ENCODE measurements at regions of chr22 and their contacts with region 1.

Region 1: DNA sequence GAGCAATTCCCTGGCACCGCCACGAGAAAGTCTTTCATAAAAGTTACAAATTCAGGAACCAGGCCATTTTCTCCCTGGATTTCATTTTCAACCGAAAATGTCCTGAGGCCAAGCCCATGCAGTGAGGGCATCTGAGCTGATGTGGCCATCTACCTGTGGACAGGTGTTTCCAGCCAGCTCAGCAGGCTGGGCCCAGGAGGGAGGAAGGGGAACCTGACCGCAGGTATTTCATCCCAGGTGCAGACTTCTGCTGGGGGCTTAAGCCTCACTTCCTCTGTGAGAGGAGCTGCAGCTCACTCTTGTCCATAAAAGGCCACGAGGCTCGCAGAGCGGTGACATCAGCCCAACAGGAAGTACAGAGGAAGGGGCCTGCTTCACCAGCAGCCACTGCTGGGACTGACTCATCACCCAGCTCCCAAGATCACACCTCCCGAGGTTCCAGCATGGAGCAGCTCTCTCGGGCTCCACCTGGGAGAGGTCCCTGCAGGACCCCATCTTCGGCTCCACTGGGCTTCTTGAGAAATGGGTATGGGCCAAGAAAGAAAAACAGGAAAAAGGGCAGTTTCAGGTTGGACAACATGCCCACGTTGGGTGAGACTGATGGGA is 56.4 kb downstream of the MYH9 start:
- DNase-seq: peak; percentile 67 to 90 (median 76)
- H3K4me3 ChIP-seq: peak overlapping the region; percentile 62
- H3K4me3 Mint-ChIP-seq: peak overlapping the region; percentile 85 to 94 (median 89)
- H3K27ac ChIP-seq: peak overlapping the region; percentile 81
- H3K27ac Mint-ChIP-seq: peak overlapping the region; percentile 94 to 100 (median 99)
- H3K4me1 ChIP-seq: peaks cover 89% of the 10 kb centered on the region
- H3K4me1 Mint-ChIP-seq: peaks cover 98 to 100% (median 100%) of the 10 kb centered on the region in 3 donors
- H3K27me3 ChIP-seq: no peaks in the 10 kb centered on the region
- H3K27me3 Mint-ChIP-seq: peaks cover 0 to 3% of the 10 kb centered on the region in 2 donors

Region 2: GRCh38 chr22:36211237-36211861 is 120.1 kb before region 1 on chr22:
- CTCF ChIA-PET with region 1: no interaction called
- POLR2A ChIA-PET with region 1: no interaction called
- DNase-seq: no peak
- H3K4me3 ChIP-seq: no peak overlapping the region
- H3K4me3 Mint-ChIP-seq: no peak overlapping the region
- H3K27ac ChIP-seq: no peak overlapping the region
- H3K27ac Mint-ChIP-seq: no peak overlapping the region
- H3K4me1 ChIP-seq: no peaks in the 10 kb centered on the region
- H3K4me1 Mint-ChIP-seq: peaks cover 7 to 12% (median 9%) of the 10 kb centered on the region in 3 donors
- H3K27me3 ChIP-seq: peaks cover 5% of the 10 kb centered on the region
- H3K27me3 Mint-ChIP-seq: peaks cover 28 to 80% of the 10 kb centered on the region in 2 donors

Region 3: GRCh38 chr22:36252754-36253517 is 78.5 kb before region 1 on chr22 and contains the start of gene APOL1:
- CTCF ChIA-PET with region 1: no interaction called
- POLR2A ChIA-PET with region 1: no interaction called
- DNase-seq: peak in 4 of 5 donors; percentile 39 to 70 (median 62)
- H3K4me3 ChIP-seq: peak within 1 kb of the TSS; percentile 74
- H3K4me3 Mint-ChIP-seq: peak within 1 kb of the TSS; percentile 88 to 99 (median 96)
- H3K27ac ChIP-seq: peak within 1 kb of the TSS; percentile 58
- H3K27ac Mint-ChIP-seq: peak within 1 kb of the TSS; percentile 76 to 99 (median 97)
- H3K4me1 ChIP-seq: peaks cover 38% of the 10 kb centered on the region
- H3K4me1 Mint-ChIP-seq: peaks cover 44 to 53% (median 46%) of the 10 kb centered on the region in 3 donors
- H3K27me3 ChIP-seq: no peaks in the 10 kb centered on the region
- H3K27me3 Mint-ChIP-seq: no peaks in the 10 kb centered on the region
- total RNA-seq, gene APOL1: 32.8 to 34.3 TPM

Region 4: GRCh38 chr22:36350751-36351594 is 19.6 kb after region 1 on chr22:
- CTCF ChIA-PET with region 1: interaction called, 8 read pairs
- POLR2A ChIA-PET with region 1: interaction called, 13 read pairs
- DNase-seq: no peak
- H3K4me3 ChIP-seq: no peak overlapping the region
- H3K4me3 Mint-ChIP-seq: peak overlapping the region; percentile 53 to 91 (median 72)
- H3K27ac ChIP-seq: no peak overlapping the region
- H3K27ac Mint-ChIP-seq: peak overlapping the region; percentile 87 to 99 (median 95)
- H3K4me1 ChIP-seq: peaks cover 92% of the 10 kb centered on the region
- H3K4me1 Mint-ChIP-seq: peaks cover 85 to 95% (median 91%) of the 10 kb centered on the region in 3 donors
- H3K27me3 ChIP-seq: no peaks in the 10 kb centered on the region
- H3K27me3 Mint-ChIP-seq: peaks cover 0 to 10% of the 10 kb centered on the region in 2 donors

Region 5: DNA sequence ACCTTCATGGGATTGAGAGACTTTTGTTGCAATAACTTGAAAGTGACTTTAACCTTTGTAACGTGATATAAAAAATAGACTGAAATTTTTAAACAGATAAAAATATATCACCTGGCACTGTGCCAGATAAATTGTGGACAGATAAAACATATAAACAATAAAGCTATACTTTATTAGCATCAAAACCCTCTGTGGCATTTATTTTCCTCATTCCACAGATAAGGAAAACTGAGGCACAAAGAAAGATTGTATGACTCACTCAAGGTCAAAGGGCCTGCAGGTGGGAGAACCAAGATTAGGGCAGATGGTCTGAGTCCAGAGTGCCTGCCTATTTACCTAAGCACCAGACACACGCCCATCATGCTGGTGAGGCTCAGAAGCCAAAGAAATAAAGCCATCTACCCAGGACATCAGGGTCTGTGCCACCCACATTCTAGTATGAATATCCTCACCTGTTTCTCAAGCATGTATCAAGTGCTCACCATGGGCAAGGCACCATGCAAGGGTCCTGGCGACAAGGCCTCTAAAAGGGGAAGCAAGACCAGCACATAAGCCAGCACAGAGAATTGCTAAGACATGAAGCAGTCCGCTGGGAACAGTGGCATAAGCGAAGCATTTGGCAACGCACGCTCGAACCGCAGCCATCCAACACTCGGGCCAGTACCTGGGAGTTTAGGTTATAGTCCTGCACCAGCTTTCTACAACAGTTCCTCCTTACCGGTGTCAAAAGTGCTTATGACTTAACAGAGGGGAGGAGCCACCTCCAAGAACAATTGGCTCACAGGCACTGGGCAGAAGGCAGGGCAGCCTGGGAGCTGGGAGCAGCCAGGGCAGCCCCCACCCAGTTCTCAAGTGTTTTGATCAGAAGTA is 38.7 kb after region 1 on chr22:
- CTCF ChIA-PET with region 1: interaction called, 22 read pairs
- POLR2A ChIA-PET with region 1: interaction called, 60 read pairs
- DNase-seq: peak in 1 of 5 donors; percentile 53
- H3K4me3 ChIP-seq: peak overlapping the region; percentile 23
- H3K4me3 Mint-ChIP-seq: peak overlapping the region; percentile 83 to 96 (median 89)
- H3K27ac ChIP-seq: peak overlapping the region; percentile 38
- H3K27ac Mint-ChIP-seq: peak overlapping the region; percentile 85 to 100 (median 98)
- H3K4me1 ChIP-seq: peaks cover 100% of the 10 kb centered on the region
- H3K4me1 Mint-ChIP-seq: peaks cover 88 to 98% (median 97%) of the 10 kb centered on the region in 3 donors
- H3K27me3 ChIP-seq: no peaks in the 10 kb centered on the region
- H3K27me3 Mint-ChIP-seq: peaks cover 0 to 4% of the 10 kb centered on the region in 2 donors

Region 6: GRCh38 chr22:36387752-36388518 is 56.5 kb after region 1 on chr22 and contains the start of gene MYH9:
- CTCF ChIA-PET with region 1: interaction called, 44 read pairs
- POLR2A ChIA-PET with region 1: interaction called, 76 read pairs
- DNase-seq: peak; percentile 97 to 99 (median 99)
- H3K4me3 ChIP-seq: peak within 1 kb of the TSS; percentile 82
- H3K4me3 Mint-ChIP-seq: peak within 1 kb of the TSS; percentile 85 to 99 (median 90)
- H3K27ac ChIP-seq: peak within 1 kb of the TSS; percentile 64
- H3K27ac Mint-ChIP-seq: peak within 1 kb of the TSS; percentile 73 to 99 (median 93)
- H3K4me1 ChIP-seq: peaks cover 33% of the 10 kb centered on the region
- H3K4me1 Mint-ChIP-seq: peaks cover 34 to 43% (median 38%) of the 10 kb centered on the region in 3 donors
- H3K27me3 ChIP-seq: no peaks in the 10 kb centered on the region
- H3K27me3 Mint-ChIP-seq: peaks cover 0 to 1% of the 10 kb centered on the region in 2 donors
- total RNA-seq, gene MYH9: 680 to 684 TPM

Region 7: DNA sequence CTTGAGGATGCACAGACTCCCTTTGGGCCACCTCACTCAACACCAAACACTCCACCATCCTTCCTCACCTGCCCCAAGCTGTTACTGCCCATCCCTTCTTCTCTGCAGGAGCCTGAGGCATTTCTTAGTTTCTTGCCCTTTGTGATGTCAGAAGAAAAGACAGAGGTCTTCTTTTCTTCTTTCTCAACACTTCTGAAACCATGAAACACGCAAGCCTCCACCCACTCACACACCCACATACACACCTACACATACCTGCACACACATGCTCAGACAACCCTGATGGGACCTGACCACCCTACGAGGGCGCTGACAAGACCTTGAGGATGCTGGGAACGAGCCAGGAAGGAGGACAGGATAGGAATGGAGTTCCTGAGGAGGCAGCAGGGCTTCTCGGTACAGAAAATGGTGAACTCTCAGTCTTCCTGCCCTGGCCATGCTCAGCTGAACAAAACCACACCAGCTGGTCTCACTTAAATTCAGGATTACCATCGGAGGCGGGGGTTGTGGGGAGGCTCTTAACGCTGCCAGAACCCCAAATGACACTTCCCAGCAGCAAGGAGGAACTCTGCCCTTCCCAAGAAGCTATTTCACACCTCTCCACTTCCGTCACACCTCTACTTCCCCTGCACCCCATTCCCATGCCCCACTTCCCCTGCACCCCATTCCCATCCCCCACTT is 622.9 kb after region 1 on chr22:
- CTCF ChIA-PET with region 1: no interaction called
- POLR2A ChIA-PET with region 1: no interaction called
- DNase-seq: no peak
- H3K4me3 ChIP-seq: no peak overlapping the region
- H3K4me3 Mint-ChIP-seq: no peak overlapping the region
- H3K27ac ChIP-seq: no peak overlapping the region
- H3K27ac Mint-ChIP-seq: no peak overlapping the region
- H3K4me1 ChIP-seq: no peaks in the 10 kb centered on the region
- H3K4me1 Mint-ChIP-seq: no peaks in the 10 kb centered on the region
- H3K27me3 ChIP-seq: no peaks in the 10 kb centered on the region
- H3K27me3 Mint-ChIP-seq: peaks cover 15 to 42% of the 10 kb centered on the region in 2 donors

Measured in CD8-positive, alpha-beta memory T cell (primary cell).